ENCODE measurements at regions of chr10 and their contacts with region 1.

Region 1: DNA sequence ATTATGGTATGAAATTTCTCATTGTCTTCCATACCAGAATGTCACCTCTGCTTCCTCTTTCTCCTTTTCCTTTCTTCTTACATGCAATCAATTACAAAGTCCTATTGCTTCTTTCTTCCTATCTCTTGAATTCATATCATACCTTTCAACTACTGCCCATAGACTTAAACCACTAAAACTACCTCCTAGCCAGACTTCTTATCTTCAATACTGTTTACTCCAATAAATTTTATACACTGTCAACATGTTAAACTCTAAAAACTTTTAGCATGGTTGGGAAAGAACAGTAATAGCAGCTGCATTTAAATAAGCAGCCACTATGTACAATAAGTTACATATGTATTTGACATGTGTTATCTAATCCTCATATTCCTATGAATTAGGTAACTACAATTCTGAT is 34.9 kb downstream of the PCGF6 start:
- DNase-seq: no peak
- ATAC-seq: no peak
- H3K4me3 ChIP-seq: no peak overlapping the region
- H3K27ac ChIP-seq: no peak overlapping the region
- H3K4me1 ChIP-seq: no peaks in the 10 kb centered on the region
- H3K27me3 ChIP-seq: no peaks in the 10 kb centered on the region
- CTCF ChIP-seq: no peak
- EP300 ChIP-seq: no peak
- POLR2A ChIP-seq: no peak
- RAD21 ChIP-seq: no peak

Region 2: DNA sequence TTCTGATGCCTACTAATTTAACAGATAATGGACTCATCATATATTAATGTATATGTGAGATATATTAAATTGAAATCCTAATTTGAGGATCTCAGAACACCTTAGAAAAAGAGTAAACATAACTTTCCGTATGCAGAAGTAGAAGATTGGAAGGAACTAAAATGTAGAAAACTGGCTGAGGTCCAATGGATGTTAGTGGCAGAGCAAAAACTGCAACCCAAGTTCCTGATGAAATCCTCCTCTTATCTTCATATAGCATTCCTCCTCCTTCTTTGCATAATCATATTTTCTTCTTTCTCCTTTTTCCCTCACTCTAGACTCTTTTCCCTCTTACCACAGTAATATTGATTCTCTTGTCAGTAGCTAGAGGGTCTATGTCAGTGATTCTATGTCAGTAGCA is 33.1 kb before region 1 on chr10:
- CTCF ChIA-PET with region 1: no interaction called
- POLR2A ChIA-PET with region 1: no interaction called
- in situ Hi-C with region 1: no loop called
- intact Hi-C with region 1: loop called (anchors 1 kb)
- DNase-seq: no peak
- ATAC-seq: no peak
- H3K4me3 ChIP-seq: no peak overlapping the region
- H3K27ac ChIP-seq: no peak overlapping the region
- H3K4me1 ChIP-seq: no peaks in the 10 kb centered on the region
- H3K27me3 ChIP-seq: peaks cover 0 to 23% of the 10 kb centered on the region in 2 experiments; a peak in 2 of 5 replicates
- CTCF ChIP-seq: no peak
- EP300 ChIP-seq: no peak
- POLR2A ChIP-seq: no peak
- RAD21 ChIP-seq: no peak

Region 3: GRCh38 chr10:103295374-103296015 is 20.6 kb before region 1 on chr10:
- CTCF ChIA-PET with region 1: no interaction called
- POLR2A ChIA-PET with region 1: no interaction called
- in situ Hi-C with region 1: no loop called
- intact Hi-C with region 1: no loop called
- DNase-seq: no peak
- ATAC-seq: no peak
- H3K4me3 ChIP-seq: no peak overlapping the region
- H3K27ac ChIP-seq: no peak overlapping the region
- H3K4me1 ChIP-seq: peaks cover 15% of the 10 kb centered on the region
- H3K27me3 ChIP-seq: peaks cover 0 to 1% of the 10 kb centered on the region in 2 experiments; a peak in 1 of 5 replicates
- CTCF ChIP-seq: no peak
- EP300 ChIP-seq: no peak
- POLR2A ChIP-seq: no peak
- RAD21 ChIP-seq: no peak

Region 4: GRCh38 chr10:103382769-103383168 is 66.7 kb after region 1 on chr10:
- CTCF ChIA-PET with region 1: no interaction called
- POLR2A ChIA-PET with region 1: no interaction called
- in situ Hi-C with region 1: no loop called
- intact Hi-C with region 1: no loop called
- DNase-seq: no peak
- ATAC-seq: no peak
- H3K4me3 ChIP-seq: no peak overlapping the region
- H3K27ac ChIP-seq: no peak overlapping the region
- H3K4me1 ChIP-seq: no peaks in the 10 kb centered on the region
- H3K27me3 ChIP-seq: no peaks in the 10 kb centered on the region
- CTCF ChIP-seq: no peak
- EP300 ChIP-seq: no peak
- POLR2A ChIP-seq: no peak
- RAD21 ChIP-seq: no peak